Activated CD4-positive, alpha-beta T cell treated with anti-CD3 and anti-CD28 coated beads for 36 hours (primary cell): ENCODE measurements at regions of chr16 and their contacts with region 1.

Region 1: GRCh38 chr16:66521951-66522771 is 27.8 kb downstream of the TK2 start:
- DNase-seq: peak; percentile 96
- ATAC-seq: peak; percentile 86
- H3K4me3 Mint-ChIP-seq: peak overlapping the region; percentile 55
- H3K27ac Mint-ChIP-seq: peak overlapping the region; percentile 86
- H3K4me1 Mint-ChIP-seq: peaks cover 83% of the 10 kb centered on the region
- H3K27me3 Mint-ChIP-seq: no peaks in the 10 kb centered on the region

Region 2: GRCh38 chr16:66552286-66553177 is 30.4 kb after region 1 on chr16 and contains the start of gene CKLF:
- CTCF ChIA-PET with region 1: interaction called, 59 read pairs
- POLR2A ChIA-PET with region 1: interaction called, 15 read pairs
- intact Hi-C with region 1: loop called (anchors 1 kb)
- DNase-seq: peak; percentile 94
- ATAC-seq: peak; percentile 73
- H3K4me3 Mint-ChIP-seq: peak within 1 kb of the TSS; percentile 97
- H3K27ac Mint-ChIP-seq: peak within 1 kb of the TSS; percentile 94
- H3K4me1 Mint-ChIP-seq: peaks cover 76% of the 10 kb centered on the region
- H3K27me3 Mint-ChIP-seq: no peaks in the 10 kb centered on the region
- total RNA-seq, gene CKLF: 93.5 to 122 TPM

Region 3: GRCh38 chr16:66562407-66562806 is 40.2 kb after region 1 on chr16:
- CTCF ChIA-PET with region 1: interaction called, 22 read pairs
- POLR2A ChIA-PET with region 1: interaction called, 15 read pairs
- intact Hi-C with region 1: loop called (anchors 1 kb)
- DNase-seq: no peak
- ATAC-seq: no peak
- H3K4me3 Mint-ChIP-seq: no peak overlapping the region
- H3K27ac Mint-ChIP-seq: no peak overlapping the region
- H3K4me1 Mint-ChIP-seq: peaks cover 65% of the 10 kb centered on the region
- H3K27me3 Mint-ChIP-seq: no peaks in the 10 kb centered on the region